ENCODE measurements at regions of chr1 and their contacts with region 1.

Region 1: GRCh38 chr1:88668405-88668804 is 15.7 kb upstream of the PKN2 start:
- DNase-seq: no peak
- H3K4me3 ChIP-seq: no peak overlapping the region
- H3K27ac ChIP-seq: no peak overlapping the region
- H3K4me1 ChIP-seq: no peaks in the 10 kb centered on the region
- H3K27me3 ChIP-seq: no peaks in the 10 kb centered on the region
- CTCF ChIP-seq: no peak
- EP300 ChIP-seq: no peak
- POLR2A ChIP-seq: no peak
- RAD21 ChIP-seq: no peak

Region 2: DNA sequence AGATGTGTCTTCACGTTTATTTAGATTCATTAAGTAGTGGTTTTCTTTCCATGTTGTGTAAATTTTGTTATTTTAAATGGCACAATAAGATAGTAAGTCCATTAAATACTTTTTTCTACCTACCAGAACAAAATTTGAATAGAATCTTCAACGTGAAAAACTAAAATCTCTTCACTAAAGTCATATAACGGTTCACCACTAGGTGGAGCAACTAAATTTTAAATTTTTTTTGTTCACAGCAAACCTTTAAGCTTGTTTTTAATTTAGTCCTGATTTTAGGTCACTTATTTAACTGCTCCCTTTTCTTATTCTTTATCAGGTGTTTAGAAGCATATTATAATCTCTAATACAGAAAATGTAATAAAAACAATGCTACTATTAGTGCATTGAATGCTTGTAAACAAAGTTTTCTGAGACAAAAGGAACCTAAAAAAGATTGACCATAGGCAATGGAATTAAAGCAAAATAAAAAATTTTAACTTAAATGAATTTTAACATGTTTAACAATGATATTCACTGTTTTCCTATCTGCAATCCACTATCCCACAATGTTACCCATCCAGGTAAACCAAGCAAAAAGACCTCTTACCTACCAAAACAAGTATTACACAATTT is 12.6 kb before region 1 on chr1:
- CTCF ChIA-PET with region 1: interaction called, 43 read pairs
- POLR2A ChIA-PET with region 1: interaction called, 3 read pairs
- DNase-seq: no peak
- H3K4me3 ChIP-seq: no peak overlapping the region
- H3K27ac ChIP-seq: no peak overlapping the region
- H3K4me1 ChIP-seq: peaks cover 0 to under 1% (median 0%) of the 10 kb centered on the region in 4 experiments; a peak in 1 of 7 replicates
- H3K27me3 ChIP-seq: peaks cover 0 to 1% (median 0%) of the 10 kb centered on the region in 4 experiments; a peak in 1 of 7 replicates
- CTCF ChIP-seq: peak in 1 of 3 experiments; percentile 49; a peak in 2 of 4 replicates
- EP300 ChIP-seq: no peak
- POLR2A ChIP-seq: no peak
- RAD21 ChIP-seq: peak in 1 of 2 experiments; percentile 21; a peak in 2 of 4 replicates

Region 3: GRCh38 chr1:88741413-88741812 is 73.0 kb after region 1 on chr1:
- CTCF ChIA-PET with region 1: no interaction called
- POLR2A ChIA-PET with region 1: no interaction called
- DNase-seq: no peak
- H3K4me3 ChIP-seq: no peak overlapping the region
- H3K27ac ChIP-seq: no peak overlapping the region
- H3K4me1 ChIP-seq: peaks cover 0 to 10% (median 7%) of the 10 kb centered on the region in 4 experiments; a peak in 3 of 7 replicates
- H3K27me3 ChIP-seq: no peaks in the 10 kb centered on the region
- CTCF ChIP-seq: no peak
- EP300 ChIP-seq: no peak
- POLR2A ChIP-seq: no peak
- RAD21 ChIP-seq: no peak

Measured in H1 (cell line).